Right cardiac atrium (tissue), 5 donors: ENCODE measurements at regions of chr20 and their contacts with region 1.

Region 1: DNA sequence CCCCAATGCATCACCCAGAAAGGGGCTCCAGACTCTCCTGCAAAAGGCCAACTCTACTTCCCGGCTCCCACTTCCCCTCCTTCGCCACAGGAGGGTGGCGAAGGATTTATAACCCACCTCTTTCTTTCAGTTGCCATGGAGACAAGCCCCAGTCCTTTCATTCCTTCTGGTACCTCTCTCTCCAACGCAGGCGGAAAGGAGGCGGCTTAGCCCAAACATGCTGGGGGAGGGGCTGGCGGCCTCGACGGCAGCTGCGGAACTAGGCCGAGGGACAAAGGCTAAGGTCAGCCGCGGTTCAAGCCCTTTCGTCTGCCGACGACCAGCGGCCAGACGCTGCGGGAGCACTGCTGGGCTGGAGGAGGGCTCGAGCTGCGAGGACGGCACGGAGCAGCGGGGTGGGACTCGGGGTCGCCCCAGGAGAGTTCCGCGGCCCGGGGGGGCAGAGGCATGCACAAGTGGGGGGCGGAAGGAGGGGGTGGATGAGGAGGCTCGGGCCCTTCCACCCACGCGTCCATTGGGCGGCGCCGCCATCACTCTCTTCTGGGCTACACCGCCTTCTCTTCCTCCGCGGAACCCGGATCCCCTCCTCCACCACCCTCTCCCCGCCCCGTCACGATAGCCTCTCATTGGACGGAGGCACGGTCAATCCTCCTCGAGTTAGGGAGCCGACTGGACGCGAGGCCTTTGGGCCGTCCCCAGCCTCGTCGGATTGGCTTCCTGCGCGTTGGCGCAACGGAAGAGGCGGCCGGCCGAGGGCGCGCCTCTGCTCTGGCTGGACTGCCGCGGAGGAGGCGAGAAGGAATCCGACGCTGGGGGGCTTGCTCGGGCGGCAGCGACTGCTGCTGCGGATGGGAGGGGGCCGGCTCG is at the start of gene PANK2:
- DNase-seq: peak; percentile 100
- ATAC-seq: peak; percentile 98 to 99
- H3K4me3 ChIP-seq: peak within 1 kb of the TSS; percentile 75
- H3K27ac ChIP-seq: peak within 1 kb of the TSS; percentile 91
- H3K4me1 ChIP-seq: peaks cover 2% of the 10 kb centered on the region
- H3K27me3 ChIP-seq: no peaks in the 10 kb centered on the region
- total RNA-seq, gene PANK2: 22.1 to 24.4 (median 23.2) TPM

Region 2: GRCh38 chr20:3980260-3981131 is 91.6 kb after region 1 on chr20:
- intact Hi-C with region 1: no loop called
- DNase-seq: peak in 1 of 3 donors; percentile 46
- ATAC-seq: peak; percentile 73 to 75
- H3K4me3 ChIP-seq: peak overlapping the region; percentile 47
- H3K27ac ChIP-seq: peak overlapping the region; percentile 86
- H3K4me1 ChIP-seq: peaks cover 1% of the 10 kb centered on the region
- H3K27me3 ChIP-seq: no peaks in the 10 kb centered on the region

Region 3: GRCh38 chr20:4073852-4074741 is 185.2 kb after region 1 on chr20:
- intact Hi-C with region 1: loop called in 1 of 4 experiments (anchors 5 kb)
- DNase-seq: no peak
- ATAC-seq: no peak
- H3K4me3 ChIP-seq: no peak overlapping the region
- H3K27ac ChIP-seq: no peak overlapping the region
- H3K4me1 ChIP-seq: no peaks in the 10 kb centered on the region
- H3K27me3 ChIP-seq: no peaks in the 10 kb centered on the region

Region 4: DNA sequence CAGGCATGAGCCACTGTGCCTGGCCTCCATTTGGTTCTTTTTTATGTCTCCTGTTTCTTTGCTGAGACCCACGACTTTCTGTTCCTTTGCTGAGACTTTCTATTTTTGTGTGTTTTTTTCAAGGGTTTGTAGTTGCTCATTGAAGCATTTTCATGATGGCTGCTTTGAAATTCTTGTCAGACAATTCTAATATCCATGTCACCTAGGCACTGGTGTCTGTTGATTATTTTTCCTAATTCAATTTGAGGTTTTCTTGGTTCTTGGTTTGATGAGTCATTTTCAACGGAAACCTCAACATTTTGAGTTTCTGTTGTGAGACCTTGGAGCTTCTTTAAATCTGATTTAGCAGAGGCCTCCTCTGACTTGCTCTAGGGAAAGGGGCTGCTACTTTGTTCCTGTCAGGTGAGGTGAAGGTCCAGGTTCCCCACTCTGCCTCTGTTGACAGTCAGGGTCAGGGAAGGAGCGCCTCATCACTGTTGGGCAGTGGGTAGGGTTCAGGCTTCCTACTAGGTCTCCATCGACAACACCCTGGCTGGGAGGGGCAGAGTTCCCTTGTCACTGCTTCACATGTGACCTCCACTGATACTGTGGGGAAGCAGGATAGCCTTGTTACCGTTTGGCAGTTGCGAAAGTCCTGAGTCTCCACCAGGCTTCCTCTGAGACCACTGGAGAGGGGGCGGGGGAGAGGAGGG is 193.7 kb after region 1 on chr20:
- intact Hi-C with region 1: loop called in 1 of 4 experiments (anchors 10 kb)
- DNase-seq: peak; percentile 63 to 80 (median 75)
- ATAC-seq: peak; percentile 70 to 76
- H3K4me3 ChIP-seq: no peak overlapping the region
- H3K27ac ChIP-seq: peak overlapping the region; percentile 88
- H3K4me1 ChIP-seq: peaks cover 4% of the 10 kb centered on the region
- H3K27me3 ChIP-seq: no peaks in the 10 kb centered on the region

Region 5: GRCh38 chr20:4135385-4136077 is 246.7 kb after region 1 on chr20:
- intact Hi-C with region 1: no loop called
- DNase-seq: no peak
- ATAC-seq: peak; percentile 52 to 91
- H3K4me3 ChIP-seq: no peak overlapping the region
- H3K27ac ChIP-seq: no peak overlapping the region
- H3K4me1 ChIP-seq: no peaks in the 10 kb centered on the region
- H3K27me3 ChIP-seq: no peaks in the 10 kb centered on the region